ENCODE measurements at regions of chr3 and their contacts with region 1.

Region 1: DNA sequence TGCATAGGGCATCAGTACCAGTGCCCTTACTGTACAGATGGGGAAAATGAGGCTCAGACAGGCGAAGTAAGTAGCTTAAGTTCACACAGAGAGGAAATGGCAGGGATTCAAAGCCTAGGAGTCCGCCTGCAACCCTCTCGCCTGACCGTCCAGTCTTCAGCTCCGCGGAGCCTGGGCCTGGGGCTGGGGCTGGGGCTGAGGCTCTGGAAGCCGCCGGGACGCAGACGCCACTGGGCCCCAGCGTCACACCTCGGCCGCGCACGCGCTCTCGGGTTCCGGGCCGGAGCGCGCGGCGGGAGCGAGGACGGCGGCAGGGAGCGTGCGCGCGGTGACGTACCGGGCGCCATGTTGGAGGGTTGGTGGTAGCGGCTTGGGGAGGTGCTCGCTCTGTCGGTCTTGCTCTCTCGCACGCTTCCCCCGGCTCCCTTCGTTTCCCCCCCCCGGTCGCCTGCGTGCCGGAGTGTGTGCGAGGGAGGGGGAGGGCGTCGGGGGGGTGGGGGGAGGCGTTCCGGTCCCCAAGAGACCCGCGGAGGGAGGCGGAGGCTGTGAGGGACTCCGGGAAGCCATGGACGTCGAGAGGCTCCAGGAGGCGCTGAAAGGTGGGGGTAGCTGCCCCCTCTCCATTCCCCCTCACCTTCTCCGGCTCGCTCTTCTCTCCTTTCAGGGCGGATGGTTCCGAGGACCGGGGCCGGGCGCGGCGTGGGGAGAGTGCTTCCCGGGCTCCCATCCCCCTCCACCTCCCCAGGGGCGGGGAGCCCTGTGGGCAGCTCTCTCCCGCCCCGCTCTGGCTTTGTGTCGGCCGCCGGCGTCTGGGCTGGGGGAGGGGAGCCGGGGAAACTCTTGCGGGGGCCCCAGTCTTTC is at the start of gene PPP4R2:
- DNase-seq: peak; percentile 72 to 93
- ATAC-seq: peak; percentile 94 to 96
- H3K4me3 ChIP-seq: peak within 1 kb of the TSS; percentile 76
- H3K27ac ChIP-seq: peak within 1 kb of the TSS; percentile 94 to 97
- H3K4me1 ChIP-seq: peaks cover 30% of the 10 kb centered on the region
- CTCF ChIP-seq: no peak
- EP300 ChIP-seq: no peak
- POLR2A ChIP-seq: peak; percentile 91
- RAD21 ChIP-seq: no peak
- polyA plus RNA-seq, gene PPP4R2: 42.9 and 68.4 TPM in 2 replicates

Region 2: GRCh38 chr3:72836923-72837322 is 159.8 kb before region 1 on chr3:
- CTCF ChIA-PET with region 1: no interaction called
- POLR2A ChIA-PET with region 1: no interaction called
- DNase-seq: no peak
- ATAC-seq: no peak
- H3K4me3 ChIP-seq: no peak overlapping the region
- H3K27ac ChIP-seq: no peak overlapping the region
- H3K4me1 ChIP-seq: no peaks in the 10 kb centered on the region
- CTCF ChIP-seq: no peak
- EP300 ChIP-seq: no peak
- POLR2A ChIP-seq: no peak
- RAD21 ChIP-seq: no peak

Region 3: DNA sequence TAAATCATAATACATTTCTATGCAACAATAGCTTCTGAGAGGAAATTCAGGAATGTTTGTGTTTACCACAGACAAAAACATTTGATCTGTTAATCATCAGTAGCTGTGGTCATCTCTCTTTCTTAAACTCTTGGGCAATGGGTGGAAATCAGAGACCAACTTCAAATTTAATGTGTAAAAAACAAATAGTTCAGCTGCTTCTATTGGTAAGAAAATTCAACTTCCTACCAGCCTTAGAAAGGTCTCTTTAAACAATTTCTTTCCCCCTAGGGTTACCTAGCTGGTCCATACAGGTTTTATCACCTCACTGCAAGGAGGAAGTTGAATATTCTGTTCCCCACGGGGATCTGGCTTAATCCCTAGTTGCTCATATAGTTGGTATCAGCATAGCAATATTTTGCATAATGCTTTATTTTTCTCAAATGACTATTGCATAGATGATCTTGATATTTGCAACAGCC is 20.4 kb before region 1 on chr3:
- CTCF ChIA-PET with region 1: no interaction called
- POLR2A ChIA-PET with region 1: no interaction called
- DNase-seq: no peak
- ATAC-seq: no peak
- H3K4me3 ChIP-seq: no peak overlapping the region
- H3K27ac ChIP-seq: no peak overlapping the region
- H3K4me1 ChIP-seq: peaks cover 5% of the 10 kb centered on the region; the same call in 1 of the 3 replicates
- CTCF ChIP-seq: no peak
- EP300 ChIP-seq: no peak
- POLR2A ChIP-seq: no peak
- RAD21 ChIP-seq: no peak

Region 4: GRCh38 chr3:73010158-73010557 is 13.5 kb after region 1 on chr3:
- CTCF ChIA-PET with region 1: interaction called, 14 read pairs
- POLR2A ChIA-PET with region 1: interaction called, 3 read pairs
- DNase-seq: no peak
- ATAC-seq: no peak
- H3K4me3 ChIP-seq: no peak overlapping the region
- H3K27ac ChIP-seq: no peak overlapping the region
- H3K4me1 ChIP-seq: no peaks in the 10 kb centered on the region
- CTCF ChIP-seq: no peak
- EP300 ChIP-seq: no peak
- POLR2A ChIP-seq: no peak
- RAD21 ChIP-seq: no peak

Region 5: DNA sequence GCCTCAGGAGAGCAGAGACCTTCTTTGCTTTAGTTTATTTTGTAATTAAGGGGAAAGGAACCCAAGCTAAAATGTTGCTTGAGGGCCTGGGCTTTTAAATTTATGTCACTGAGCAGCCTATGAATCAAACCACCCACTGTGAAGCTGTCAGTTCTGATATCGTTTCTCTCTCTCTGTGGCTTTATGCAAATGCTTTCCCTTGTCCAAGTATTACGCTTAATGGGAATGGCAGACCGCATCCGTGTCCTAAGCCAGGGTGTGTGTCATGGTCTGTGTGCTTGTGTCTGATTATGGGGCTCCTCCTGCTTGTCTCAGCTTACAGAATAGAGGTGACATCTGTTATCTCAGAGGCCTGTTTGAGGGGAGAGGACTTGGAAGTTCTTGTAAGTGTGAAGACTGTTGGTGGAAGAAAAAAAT is 147.1 kb after region 1 on chr3:
- CTCF ChIA-PET with region 1: no interaction called
- POLR2A ChIA-PET with region 1: no interaction called
- DNase-seq: no peak
- ATAC-seq: no peak
- H3K4me3 ChIP-seq: no peak overlapping the region
- H3K27ac ChIP-seq: no peak overlapping the region
- H3K4me1 ChIP-seq: no peaks in the 10 kb centered on the region
- CTCF ChIP-seq: no peak
- EP300 ChIP-seq: no peak
- POLR2A ChIP-seq: no peak
- RAD21 ChIP-seq: no peak

Measured in A549 (cell line).